ENCODE measurements at regions of chr4 and their contacts with region 1.

Region 1: DNA sequence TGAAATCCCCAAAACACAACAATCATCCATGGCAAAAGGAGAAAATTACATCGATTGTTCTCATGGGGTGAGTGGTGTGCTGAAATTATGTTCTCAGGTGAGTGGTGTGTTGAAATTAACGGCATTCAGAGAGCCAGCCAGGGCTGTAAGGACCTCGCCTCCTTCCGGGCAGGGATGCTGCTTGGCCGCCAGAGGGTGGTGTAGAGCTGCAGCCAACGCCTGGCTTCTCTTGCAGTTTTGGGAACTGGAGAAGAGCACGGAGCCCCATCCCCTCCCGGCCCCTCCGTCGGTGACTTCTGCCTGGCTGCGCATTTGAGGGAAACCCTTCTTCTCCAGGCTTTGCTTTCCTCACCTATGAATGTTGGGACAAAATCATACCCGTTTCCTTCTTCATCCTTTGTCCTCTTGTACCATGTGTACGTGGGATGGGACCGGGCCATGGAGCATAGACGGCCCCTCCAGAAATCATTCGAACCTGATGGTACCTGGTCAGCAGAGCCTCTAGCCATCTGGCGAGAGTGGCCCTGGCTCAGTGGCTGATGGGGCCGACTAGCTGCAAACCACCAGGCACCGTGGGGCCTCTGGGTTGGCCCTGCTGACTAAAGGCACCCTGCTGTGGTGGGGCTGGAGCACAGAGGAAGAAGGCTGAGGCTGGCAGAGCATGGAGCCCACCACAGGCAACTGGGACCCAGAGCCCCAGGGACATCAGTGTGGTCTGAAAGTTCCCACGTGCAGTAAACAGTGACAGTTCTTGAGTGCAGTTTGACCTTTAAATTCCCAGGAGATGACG is 28.4 kb downstream of the TRMT44 start:
- H3K4me3 ChIP-seq: no peak overlapping the region
- H3K27ac ChIP-seq: no peak overlapping the region
- H3K4me1 ChIP-seq: no peaks in the 10 kb centered on the region
- CTCF ChIP-seq: peak; percentile 68

Region 2: DNA sequence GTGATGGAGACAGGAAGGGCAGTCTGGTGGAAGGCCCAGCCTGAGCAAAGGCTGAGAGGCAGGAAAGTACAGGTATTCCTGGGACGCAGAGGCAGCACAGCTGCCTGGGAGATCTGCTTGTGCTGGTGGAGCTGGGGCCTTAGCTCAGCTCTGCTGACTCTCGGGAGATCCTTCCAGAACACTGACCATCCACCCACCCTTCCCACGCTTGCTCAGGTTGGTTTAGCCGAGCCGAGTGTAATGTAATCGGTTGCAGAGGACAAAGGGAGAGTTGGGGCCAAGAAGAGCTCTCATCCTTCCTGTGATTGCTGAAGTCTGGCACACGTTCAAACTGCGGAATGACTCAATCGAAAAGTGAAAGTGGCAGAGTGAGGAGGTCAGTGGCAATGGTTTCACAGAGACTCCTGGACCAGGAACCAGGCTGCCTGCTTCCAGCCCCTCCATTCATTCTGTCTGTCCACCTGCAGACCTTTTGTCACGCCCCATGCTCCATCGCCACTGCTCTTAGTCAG is 68.2 kb after region 1 on chr4:
- CTCF ChIA-PET with region 1: interaction called, 10 read pairs
- POLR2A ChIA-PET with region 1: interaction called, 4 read pairs
- H3K4me3 ChIP-seq: no peak overlapping the region
- H3K27ac ChIP-seq: no peak overlapping the region
- H3K4me1 ChIP-seq: no peaks in the 10 kb centered on the region
- CTCF ChIP-seq: no peak

Region 3: DNA sequence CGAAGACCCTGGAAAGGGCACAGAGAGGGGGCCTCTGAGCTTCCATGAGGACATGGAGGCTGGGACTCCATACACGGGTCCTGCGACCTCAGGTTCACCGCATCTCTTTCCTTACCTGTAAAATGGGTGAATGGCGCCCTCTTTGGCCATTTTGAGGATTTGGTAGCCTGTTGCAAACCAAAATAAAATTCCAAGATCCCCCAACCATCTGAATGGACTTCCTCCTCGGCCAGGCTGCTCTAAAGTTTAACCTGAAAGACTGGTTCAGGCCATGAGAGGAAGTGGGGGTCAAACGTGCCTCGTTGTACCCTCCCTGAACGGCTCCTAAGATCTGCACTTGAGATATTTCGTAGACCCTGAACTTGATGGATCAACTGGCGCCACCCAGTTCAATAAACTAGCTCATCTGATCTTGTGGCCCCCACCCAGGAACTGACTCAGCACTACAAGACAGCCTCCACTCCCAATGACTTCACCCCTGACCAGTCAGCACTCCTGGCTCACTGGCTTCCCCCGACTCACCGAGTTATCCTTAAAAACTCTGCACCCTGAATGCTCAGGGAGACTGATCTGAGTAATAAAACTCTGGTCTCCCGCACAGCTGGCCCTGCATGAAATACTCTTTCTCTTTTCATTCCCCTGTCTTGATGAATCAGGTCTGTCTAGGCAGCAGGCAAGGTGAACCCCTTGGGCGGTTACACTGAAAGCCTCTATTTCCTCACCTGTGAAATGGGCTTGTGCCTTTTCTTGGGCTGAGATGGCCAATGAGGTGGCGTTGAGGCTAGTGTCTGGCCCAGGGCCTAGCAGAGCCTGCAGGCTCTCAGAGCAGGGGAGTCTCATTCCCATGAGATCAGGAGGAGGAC is 78.4 kb after region 1 on chr4:
- CTCF ChIA-PET with region 1: interaction called, 13 read pairs
- POLR2A ChIA-PET with region 1: no interaction called
- H3K4me3 ChIP-seq: no peak overlapping the region
- H3K27ac ChIP-seq: no peak overlapping the region
- H3K4me1 ChIP-seq: no peaks in the 10 kb centered on the region
- CTCF ChIP-seq: no peak

Region 4: GRCh38 chr4:8594097-8595038 is 125.4 kb after region 1 on chr4:
- CTCF ChIA-PET with region 1: interaction called, 19 read pairs
- POLR2A ChIA-PET with region 1: interaction called, 3 read pairs
- H3K4me3 ChIP-seq: no peak overlapping the region
- H3K27ac ChIP-seq: no peak overlapping the region
- H3K4me1 ChIP-seq: no peaks in the 10 kb centered on the region
- CTCF ChIP-seq: 0 out of 2 replicates have a peak, but pooled peaks have one; percentile 24